ENCODE measurements at regions of chr2 and their contacts with region 1.

Region 1: DNA sequence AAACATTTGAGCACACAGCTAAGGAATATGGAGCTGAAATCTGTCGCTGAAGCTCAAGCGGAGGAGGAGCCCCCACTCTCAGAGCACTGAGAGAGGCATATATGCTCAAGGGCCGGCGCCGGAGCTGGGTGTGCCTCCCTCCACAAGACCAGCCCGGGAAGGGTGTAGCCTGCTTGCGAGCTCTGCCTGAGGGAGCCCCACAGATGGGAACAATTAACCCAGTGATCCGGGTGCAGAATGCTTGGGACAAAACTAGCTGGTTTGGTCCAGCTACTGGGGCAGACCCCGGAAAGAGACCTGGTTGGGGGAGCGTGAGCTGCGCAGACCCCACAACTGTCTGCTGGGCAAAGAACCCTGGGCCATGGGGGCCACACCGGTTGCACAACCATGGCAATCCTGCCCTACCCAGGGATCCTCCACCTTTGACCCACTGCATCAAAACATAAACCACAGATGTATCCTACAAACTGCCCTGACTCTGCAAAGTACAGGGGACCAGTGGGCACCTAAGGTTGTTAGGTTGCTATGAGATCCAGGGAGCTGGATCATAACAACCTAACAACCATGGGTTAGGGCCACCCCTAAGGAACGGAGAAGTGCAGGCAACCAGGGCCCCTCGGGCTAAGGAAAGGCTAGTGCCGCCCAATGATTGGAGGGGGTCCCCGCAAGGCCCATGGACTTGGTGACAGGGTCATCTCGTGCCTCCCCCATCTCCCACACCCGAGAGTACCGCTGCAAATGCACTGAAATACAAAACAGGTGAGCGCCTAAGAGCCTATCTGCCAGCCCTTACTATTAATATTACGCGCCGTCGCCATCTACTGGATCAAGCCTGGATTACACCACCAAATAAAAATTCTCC is 53.4 kb upstream of the SCN1A start:
- H3K4me3 ChIP-seq: no peak overlapping the region
- H3K27ac ChIP-seq: no peak overlapping the region
- H3K4me1 ChIP-seq: no peaks in the 10 kb centered on the region
- CTCF ChIP-seq: peak; percentile 49; the same call in 1 of the 2 replicates

Region 2: GRCh38 chr2:166057370-166058164 is 123.6 kb before region 1 on chr2:
- CTCF ChIA-PET with region 1: interaction called, 24 read pairs
- POLR2A ChIA-PET with region 1: no interaction called
- H3K4me3 ChIP-seq: no peak overlapping the region
- H3K27ac ChIP-seq: no peak overlapping the region
- H3K4me1 ChIP-seq: no peaks in the 10 kb centered on the region; the same call in 1 of the 2 replicates
- CTCF ChIP-seq: no peak

Region 3: DNA sequence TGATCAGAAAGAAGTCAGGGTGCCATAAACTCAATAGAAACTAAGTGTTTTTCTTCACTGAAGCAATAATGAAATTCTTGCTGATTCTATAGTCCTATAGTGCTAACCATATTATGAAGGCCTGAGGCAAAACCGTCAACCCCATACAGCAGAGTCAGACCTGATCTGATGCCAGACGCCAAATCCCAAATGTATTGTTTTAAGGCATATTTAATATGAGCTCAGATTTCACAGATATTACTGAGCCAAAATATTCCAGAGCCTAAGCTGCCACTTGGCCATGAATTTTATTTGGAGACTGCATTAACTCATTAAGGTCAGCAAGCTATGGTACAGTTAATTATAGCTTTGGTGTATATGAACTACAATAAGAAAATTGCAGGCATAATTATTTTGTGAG is 106.8 kb before region 1 on chr2:
- CTCF ChIA-PET with region 1: no interaction called
- POLR2A ChIA-PET with region 1: no interaction called
- H3K4me3 ChIP-seq: no peak overlapping the region
- H3K27ac ChIP-seq: no peak overlapping the region
- H3K4me1 ChIP-seq: no peaks in the 10 kb centered on the region
- CTCF ChIP-seq: no peak

Measured in HEK293 (cell line).